CD4-positive, alpha-beta memory T cell (primary cell): ENCODE measurements at regions of chr14 and their contacts with region 1.

Region 1: DNA sequence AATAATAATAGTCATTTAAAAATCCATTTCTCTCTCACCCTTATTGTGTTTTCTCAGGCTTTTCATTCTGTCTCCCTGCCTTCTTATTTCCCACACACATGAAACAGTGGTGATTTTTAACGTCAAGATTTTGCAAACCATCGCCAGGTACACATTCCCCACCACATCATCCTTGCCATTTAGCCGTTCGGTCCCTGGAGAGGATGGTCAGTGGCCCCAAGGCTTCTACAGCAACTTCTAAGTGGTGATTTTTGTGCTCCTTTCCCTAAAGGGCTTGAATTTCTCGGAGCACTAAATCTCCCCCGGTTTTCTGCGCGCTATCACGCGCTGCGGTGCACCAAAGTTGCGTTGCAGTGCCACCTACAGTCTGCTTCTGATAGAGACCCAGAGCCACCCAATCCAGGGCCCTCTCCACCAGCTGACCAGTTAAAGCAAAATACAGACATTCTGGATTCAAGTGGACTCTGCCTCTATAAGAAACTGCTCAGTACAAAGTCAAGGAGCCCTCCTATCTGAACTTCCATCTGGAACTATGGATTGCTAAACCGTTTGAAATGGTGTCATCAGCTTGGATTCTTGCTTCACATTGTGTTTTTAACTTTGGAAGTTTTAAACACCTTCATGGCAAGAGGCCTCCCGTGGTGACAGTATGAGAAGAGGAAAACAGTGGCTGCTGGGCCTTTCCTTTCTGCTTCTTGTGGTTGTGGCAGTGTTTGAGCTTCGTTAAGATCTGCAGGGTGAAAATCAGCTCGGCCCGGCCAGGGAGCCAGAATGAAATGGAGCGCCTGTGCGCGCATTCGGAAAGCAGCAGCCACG is 234.0 kb downstream of the SPTSSA start:
- DNase-seq: peak in 4 of 5 donors; percentile 36 to 47 (median 44)
- H3K4me3 ChIP-seq: no peak overlapping the region
- H3K4me3 Mint-ChIP-seq: peak overlapping the region; percentile 23 to 72 (median 50)
- H3K27ac ChIP-seq: no peak overlapping the region
- H3K27ac Mint-ChIP-seq: peak overlapping the region in 1 of 7 donors; percentile 49
- H3K4me1 ChIP-seq: peaks cover 4% of the 10 kb centered on the region
- H3K4me1 Mint-ChIP-seq: peaks cover 3 to 8% (median 6%) of the 10 kb centered on the region in 4 donors
- H3K27me3 ChIP-seq: no peaks in the 10 kb centered on the region
- H3K27me3 Mint-ChIP-seq: peaks cover 0 to 7% of the 10 kb centered on the region in 2 donors

Region 2: GRCh38 chr14:33475623-33476022 is 752.4 kb before region 1 on chr14:
- CTCF ChIA-PET with region 1: no interaction called
- POLR2A ChIA-PET with region 1: no interaction called
- intact Hi-C with region 1: loop called (anchors 5 kb)
- DNase-seq: no peak
- H3K4me3 ChIP-seq: no peak overlapping the region
- H3K4me3 Mint-ChIP-seq: no peak overlapping the region
- H3K27ac ChIP-seq: no peak overlapping the region
- H3K27ac Mint-ChIP-seq: no peak overlapping the region
- H3K4me1 ChIP-seq: no peaks in the 10 kb centered on the region
- H3K4me1 Mint-ChIP-seq: no peaks in the 10 kb centered on the region
- H3K27me3 ChIP-seq: no peaks in the 10 kb centered on the region
- H3K27me3 Mint-ChIP-seq: peaks cover 2 to 5% of the 10 kb centered on the region in 2 donors

Region 3: GRCh38 chr14:33839193-33840076 is 388.6 kb before region 1 on chr14:
- CTCF ChIA-PET with region 1: interaction called, 48 read pairs
- POLR2A ChIA-PET with region 1: no interaction called
- intact Hi-C with region 1: loop called (anchors 1 kb)
- DNase-seq: peak in 4 of 5 donors; percentile 50 to 63 (median 58)
- H3K4me3 ChIP-seq: no peak overlapping the region
- H3K4me3 Mint-ChIP-seq: no peak overlapping the region
- H3K27ac ChIP-seq: no peak overlapping the region
- H3K27ac Mint-ChIP-seq: no peak overlapping the region
- H3K4me1 ChIP-seq: peaks cover 7% of the 10 kb centered on the region
- H3K4me1 Mint-ChIP-seq: peaks cover 0 to 8% (median 3%) of the 10 kb centered on the region in 4 donors
- H3K27me3 ChIP-seq: no peaks in the 10 kb centered on the region
- H3K27me3 Mint-ChIP-seq: no peaks in the 10 kb centered on the region

Region 4: GRCh38 chr14:34214961-34215360 is 13.1 kb before region 1 on chr14:
- CTCF ChIA-PET with region 1: interaction called, 12 read pairs
- POLR2A ChIA-PET with region 1: interaction called, 3 read pairs
- intact Hi-C with region 1: no loop called
- DNase-seq: no peak
- H3K4me3 ChIP-seq: no peak overlapping the region
- H3K4me3 Mint-ChIP-seq: no peak overlapping the region
- H3K27ac ChIP-seq: no peak overlapping the region
- H3K27ac Mint-ChIP-seq: no peak overlapping the region
- H3K4me1 ChIP-seq: no peaks in the 10 kb centered on the region
- H3K4me1 Mint-ChIP-seq: peaks cover 12 to 15% (median 12%) of the 10 kb centered on the region in 4 donors
- H3K27me3 ChIP-seq: peaks cover 4% of the 10 kb centered on the region
- H3K27me3 Mint-ChIP-seq: peaks cover 0 to 4% of the 10 kb centered on the region in 2 donors

Region 5: DNA sequence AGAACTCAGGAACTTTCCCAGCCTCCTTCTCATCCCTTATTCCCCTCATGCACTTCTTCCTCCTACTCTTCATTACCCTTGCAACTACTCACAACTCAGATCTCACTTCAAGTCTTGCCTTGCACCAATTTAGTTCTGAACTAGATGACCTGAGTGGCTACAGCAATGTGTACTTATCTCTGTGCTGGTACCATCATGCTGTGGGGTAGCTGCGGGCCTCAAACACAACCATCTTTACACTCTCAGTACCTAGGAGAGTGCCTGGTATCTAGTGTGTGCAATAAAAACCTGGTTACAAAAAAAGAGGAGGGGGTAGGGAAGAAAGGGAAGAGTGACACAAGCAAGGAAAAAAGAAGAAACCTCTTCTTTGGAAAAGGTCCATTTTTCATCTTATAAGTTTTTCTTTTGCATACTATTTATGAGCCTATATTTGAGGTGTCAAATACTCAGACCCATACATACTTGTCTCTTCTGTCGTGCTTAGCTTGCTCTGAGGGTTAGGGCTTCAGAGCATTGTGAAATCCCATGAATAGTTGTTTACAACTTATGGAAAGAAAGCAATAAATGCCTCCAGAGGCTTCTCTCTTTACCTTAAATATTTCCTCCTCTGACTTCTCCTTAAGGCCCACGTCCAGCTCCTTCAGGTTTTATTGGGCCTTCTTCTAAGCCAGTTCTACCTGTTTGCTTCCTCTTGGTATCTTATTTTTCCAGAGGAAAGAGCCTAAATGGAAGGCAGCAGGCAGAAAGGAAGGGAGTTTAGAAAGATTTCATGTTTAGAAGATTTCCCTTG is 15.2 kb after region 1 on chr14:
- CTCF ChIA-PET with region 1: interaction called, 10 read pairs
- POLR2A ChIA-PET with region 1: no interaction called
- intact Hi-C with region 1: no loop called
- DNase-seq: no peak
- H3K4me3 ChIP-seq: no peak overlapping the region
- H3K4me3 Mint-ChIP-seq: no peak overlapping the region
- H3K27ac ChIP-seq: no peak overlapping the region
- H3K27ac Mint-ChIP-seq: no peak overlapping the region
- H3K4me1 ChIP-seq: no peaks in the 10 kb centered on the region
- H3K4me1 Mint-ChIP-seq: no peaks in the 10 kb centered on the region
- H3K27me3 ChIP-seq: no peaks in the 10 kb centered on the region
- H3K27me3 Mint-ChIP-seq: peaks cover 4 to 5% of the 10 kb centered on the region in 2 donors